ENCODE measurements at regions of chr15 and their contacts with region 1.

Region 1: GRCh38 chr15:47987908-47988532 is 132.8 kb upstream of the SLC24A5 start:
- DNase-seq: no peak
- ATAC-seq: peak; percentile 73 to 91 (median 87)
- H3K4me3 ChIP-seq: no peak overlapping the region
- H3K27ac ChIP-seq: no peak overlapping the region
- H3K4me1 ChIP-seq: no peaks in the 10 kb centered on the region
- H3K27me3 ChIP-seq: no peaks in the 10 kb centered on the region
- CTCF ChIP-seq: peak; percentile 67 to 74 (median 68)
- POLR2A ChIP-seq: no peak

Region 2: GRCh38 chr15:47194718-47195117 is 793.3 kb before region 1 on chr15:
- intact Hi-C with region 1: loop called in 1 of 2 experiments (anchors 5 kb)
- DNase-seq: no peak
- ATAC-seq: peak in 2 of 4 donors; percentile 39 to 55
- H3K4me3 ChIP-seq: no peak overlapping the region
- H3K27ac ChIP-seq: no peak overlapping the region
- H3K4me1 ChIP-seq: no peaks in the 10 kb centered on the region
- H3K27me3 ChIP-seq: no peaks in the 10 kb centered on the region
- CTCF ChIP-seq: peak in 3 of 4 donors; percentile 19 to 36 (median 23)
- POLR2A ChIP-seq: no peak

Region 3: GRCh38 chr15:48052946-48053345 is 64.9 kb after region 1 on chr15:
- intact Hi-C with region 1: no loop called
- DNase-seq: no peak
- ATAC-seq: no peak
- H3K4me3 ChIP-seq: no peak overlapping the region
- H3K27ac ChIP-seq: no peak overlapping the region
- H3K4me1 ChIP-seq: no peaks in the 10 kb centered on the region
- H3K27me3 ChIP-seq: no peaks in the 10 kb centered on the region
- CTCF ChIP-seq: no peak
- POLR2A ChIP-seq: no peak

Measured in right lobe of liver (tissue), 6 donors.